ENCODE measurements at regions of chr9 and their contacts with region 1.

Region 1: GRCh38 chr9:134024828-134025605 is at the start of gene BRD3OS:
- DNase-seq: peak; percentile 86 to 99 (median 97)

Region 2: DNA sequence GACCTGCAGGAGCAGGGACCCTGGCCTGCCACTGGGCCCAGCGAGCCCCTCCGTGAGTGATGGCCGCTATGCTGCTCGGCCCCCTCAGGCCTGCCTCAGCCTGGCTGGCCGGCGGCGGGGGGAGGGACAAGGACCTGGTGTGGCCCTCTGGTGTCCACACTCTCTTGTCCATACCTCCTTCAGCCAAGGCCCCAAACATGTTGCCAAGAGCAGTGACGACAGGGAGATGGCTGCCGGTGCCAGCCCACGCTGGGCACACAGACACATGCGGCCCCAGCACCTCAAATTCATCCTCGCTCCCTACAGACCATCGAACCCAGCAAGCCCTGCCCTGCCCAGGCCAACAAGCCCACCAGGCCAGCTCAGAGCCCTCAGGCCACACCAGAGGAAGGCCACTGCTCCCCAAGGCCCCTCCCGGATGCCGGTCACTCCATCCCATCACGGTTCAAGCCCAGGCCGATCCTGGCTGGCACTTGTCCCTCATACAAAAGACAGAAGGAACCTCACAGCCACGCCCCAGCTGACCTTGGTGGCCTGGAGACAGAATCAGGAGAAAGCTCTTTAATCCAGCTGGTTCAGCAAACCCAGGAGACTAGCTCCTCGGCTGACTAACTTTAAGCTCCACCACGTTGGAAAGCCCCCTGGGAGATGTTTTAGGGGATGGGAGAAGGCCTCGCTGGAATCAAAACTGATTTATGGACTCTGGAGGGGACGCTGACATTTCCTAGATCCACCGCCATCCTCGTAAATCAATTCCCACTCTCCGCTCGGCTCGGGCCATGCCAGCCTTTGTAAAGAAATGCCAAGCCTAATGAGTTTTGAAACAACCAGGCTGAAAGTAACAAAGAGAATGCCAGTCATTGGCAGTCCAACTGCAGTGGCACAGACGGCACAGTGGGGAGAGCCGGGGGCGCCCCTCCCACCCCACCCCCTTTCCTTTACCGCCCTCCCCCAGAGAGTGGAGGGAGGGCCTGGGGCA is 117.8 kb before region 1 on chr9:
- intact Hi-C with region 1: no loop called
- DNase-seq: peak in 6 of 42 donors; percentile 34 to 62 (median 48)

Region 3: DNA sequence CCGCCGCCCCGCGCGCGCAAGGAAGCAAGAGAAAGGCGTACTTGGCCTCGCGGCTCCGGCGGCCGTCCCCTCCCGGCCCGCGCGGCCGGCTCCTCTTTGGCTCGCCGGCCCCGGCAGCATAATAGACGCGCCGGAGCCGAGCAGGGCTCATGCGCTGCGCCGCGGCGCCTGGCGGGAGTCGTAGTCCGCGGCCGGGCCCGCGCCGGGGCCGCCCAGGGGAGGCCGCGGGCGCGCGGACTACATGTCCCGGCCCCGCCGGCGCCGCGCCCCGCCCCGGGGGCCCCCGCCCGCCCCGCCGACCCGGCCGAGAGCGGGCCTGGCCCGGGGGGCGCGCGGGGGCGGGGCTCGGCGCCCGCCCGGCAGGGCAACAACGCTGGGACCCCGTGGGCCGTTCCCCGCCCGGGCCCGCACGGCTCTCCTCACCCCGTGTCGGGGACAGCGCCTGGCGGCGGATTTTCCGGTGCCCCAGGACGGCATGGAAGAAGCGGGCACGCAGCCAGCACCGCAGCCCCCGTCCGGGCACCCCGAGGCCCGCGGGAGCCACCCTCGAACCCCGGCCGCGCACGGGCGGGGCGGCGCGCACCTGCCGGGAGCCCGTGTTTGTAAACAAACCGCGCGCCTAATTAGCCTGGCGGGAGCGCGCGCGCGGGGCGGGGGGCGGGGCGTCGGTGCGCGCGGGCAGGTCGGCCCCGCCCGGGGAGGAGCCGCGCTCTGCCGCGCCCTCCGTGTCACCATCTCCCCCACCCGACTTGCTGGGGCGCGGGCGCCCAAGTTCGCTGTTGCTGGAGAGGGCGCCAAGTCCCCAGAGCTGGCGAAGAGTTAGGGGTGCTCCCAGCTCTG is 43.1 kb after region 1 on chr9 and contains the start of gene BRD3:
- intact Hi-C with region 1: loop called (anchors 5 kb)
- DNase-seq: peak; percentile 54 to 94 (median 87)

Measured in head of caudate nucleus (tissue), 42 donors.